Activated T-helper 1 cell treated with anti-CD3 and anti-CD28 coated beads, Interleukin-12 subunit alpha, Interleukin-12 subunit beta, Interleukin-2, Interleukin-4 antibody, amounts not matched to agents 30 ng/mL and 10 ng/mL and 1 ng/mL, durations not matched to agents 14 hours and 24 hours and 36 hours (primary cell): ENCODE measurements at regions of chr14 and their contacts with region 1.

Region 1: GRCh38 chr14:71267007-71267513 is 359.8 kb downstream of the PCNX1 start:
- DNase-seq: no peak
- H3K4me3 Mint-ChIP-seq: peak overlapping the region; percentile 60
- H3K27ac Mint-ChIP-seq: peak overlapping the region; percentile 80
- H3K4me1 Mint-ChIP-seq: peaks cover 52% of the 10 kb centered on the region
- H3K27me3 Mint-ChIP-seq: no peaks in the 10 kb centered on the region

Region 2: DNA sequence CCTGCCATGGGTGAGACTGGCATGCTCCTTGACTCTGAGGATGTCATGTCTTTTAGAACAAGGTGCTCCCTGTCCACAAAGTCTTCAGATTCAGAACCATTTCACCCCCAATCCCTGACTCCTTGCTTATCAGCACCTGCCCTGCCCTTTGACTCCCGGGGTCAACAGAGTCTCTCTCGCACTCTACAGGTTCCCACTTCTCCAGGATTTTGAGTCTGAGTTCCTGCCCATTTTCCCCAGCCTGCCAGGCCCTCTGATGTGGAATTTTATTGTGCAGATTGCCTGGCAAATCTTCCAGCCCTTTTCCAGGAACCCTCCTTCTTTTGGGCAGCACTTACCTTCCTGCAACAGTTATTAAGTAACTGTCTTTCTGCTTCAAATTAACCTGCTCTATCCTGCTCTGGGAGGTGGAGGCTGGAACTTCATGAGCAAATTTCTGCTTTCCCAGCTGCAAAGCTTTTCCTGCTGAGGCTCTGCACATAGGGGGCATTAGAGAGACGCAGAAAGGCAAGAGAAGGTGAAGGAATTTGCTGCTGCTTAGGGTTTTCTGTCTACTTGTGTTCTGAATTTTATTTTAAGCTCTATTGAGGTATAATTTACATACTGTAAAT is 100.8 kb before region 1 on chr14:
- intact Hi-C with region 1: loop called (anchors 5 kb)
- DNase-seq: no peak
- H3K4me3 Mint-ChIP-seq: no peak overlapping the region
- H3K27ac Mint-ChIP-seq: no peak overlapping the region
- H3K4me1 Mint-ChIP-seq: peaks cover 20% of the 10 kb centered on the region
- H3K27me3 Mint-ChIP-seq: peaks cover 10% of the 10 kb centered on the region

Region 3: DNA sequence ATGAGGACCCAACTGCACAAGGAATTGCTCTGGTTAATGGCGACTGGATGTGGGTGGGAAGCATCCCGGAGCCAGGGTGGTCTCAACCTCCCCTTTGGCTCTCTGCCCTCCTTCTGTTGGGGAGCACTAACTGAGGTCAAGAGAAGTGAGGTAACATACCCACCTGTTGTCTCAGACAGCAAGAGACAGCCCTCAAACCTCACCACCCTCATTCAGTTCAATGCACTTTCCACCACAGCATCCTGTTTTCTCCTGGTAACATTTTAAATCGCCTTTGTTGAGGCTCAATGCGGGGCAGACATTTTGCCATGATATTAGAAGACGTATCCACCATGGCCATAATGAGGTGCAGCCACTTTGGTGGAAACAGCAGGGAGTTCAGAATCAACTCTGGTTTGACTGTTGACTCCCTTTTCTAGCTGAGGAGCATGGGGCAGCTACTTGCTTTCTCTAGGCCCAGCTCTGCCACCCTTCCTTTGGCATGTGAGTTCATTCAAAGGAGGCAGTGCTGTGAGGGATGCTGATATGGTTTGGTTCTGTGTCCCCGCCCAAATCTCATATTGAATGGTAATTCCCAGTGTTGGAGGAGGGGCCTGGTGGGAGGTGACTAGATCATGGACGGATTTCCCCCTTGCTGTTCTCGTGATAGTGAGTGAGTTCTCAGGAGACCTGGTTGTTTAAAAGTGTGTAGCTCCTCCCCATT is 21.2 kb before region 1 on chr14:
- intact Hi-C with region 1: loop called (anchors 2 kb)
- DNase-seq: peak; percentile 16
- H3K4me3 Mint-ChIP-seq: peak overlapping the region; percentile 40
- H3K27ac Mint-ChIP-seq: peak overlapping the region; percentile 91
- H3K4me1 Mint-ChIP-seq: peaks cover 62% of the 10 kb centered on the region
- H3K27me3 Mint-ChIP-seq: no peaks in the 10 kb centered on the region

Region 4: DNA sequence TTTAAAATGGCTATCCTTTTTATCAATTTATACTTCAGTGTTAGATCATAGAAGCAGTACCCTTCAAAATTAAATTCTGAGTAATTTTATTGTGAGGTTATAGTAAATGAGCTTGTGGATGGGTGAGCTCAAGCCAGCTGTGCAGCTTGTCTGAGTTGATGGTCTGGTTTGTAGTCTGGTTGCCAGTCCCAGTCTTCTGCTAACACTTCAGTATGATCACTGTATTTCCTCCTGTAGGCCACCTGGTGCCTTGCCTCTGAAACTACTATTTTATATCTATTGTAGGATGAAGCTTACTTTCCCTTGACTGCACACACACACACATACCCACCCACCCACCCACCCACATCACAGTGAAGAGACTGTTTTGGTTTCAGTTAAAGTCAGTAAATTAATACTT is 136.6 kb after region 1 on chr14:
- intact Hi-C with region 1: loop called (anchors 1 kb)
- DNase-seq: peak; percentile 15
- H3K4me3 Mint-ChIP-seq: no peak overlapping the region
- H3K27ac Mint-ChIP-seq: peak overlapping the region; percentile 67
- H3K4me1 Mint-ChIP-seq: peaks cover 56% of the 10 kb centered on the region
- H3K27me3 Mint-ChIP-seq: no peaks in the 10 kb centered on the region